Activated CD4-positive, alpha-beta T cell treated with anti-CD3 and anti-CD28 coated beads for 36 hours (primary cell): ENCODE measurements at regions of chr7 and their contacts with region 1.

Region 1: DNA sequence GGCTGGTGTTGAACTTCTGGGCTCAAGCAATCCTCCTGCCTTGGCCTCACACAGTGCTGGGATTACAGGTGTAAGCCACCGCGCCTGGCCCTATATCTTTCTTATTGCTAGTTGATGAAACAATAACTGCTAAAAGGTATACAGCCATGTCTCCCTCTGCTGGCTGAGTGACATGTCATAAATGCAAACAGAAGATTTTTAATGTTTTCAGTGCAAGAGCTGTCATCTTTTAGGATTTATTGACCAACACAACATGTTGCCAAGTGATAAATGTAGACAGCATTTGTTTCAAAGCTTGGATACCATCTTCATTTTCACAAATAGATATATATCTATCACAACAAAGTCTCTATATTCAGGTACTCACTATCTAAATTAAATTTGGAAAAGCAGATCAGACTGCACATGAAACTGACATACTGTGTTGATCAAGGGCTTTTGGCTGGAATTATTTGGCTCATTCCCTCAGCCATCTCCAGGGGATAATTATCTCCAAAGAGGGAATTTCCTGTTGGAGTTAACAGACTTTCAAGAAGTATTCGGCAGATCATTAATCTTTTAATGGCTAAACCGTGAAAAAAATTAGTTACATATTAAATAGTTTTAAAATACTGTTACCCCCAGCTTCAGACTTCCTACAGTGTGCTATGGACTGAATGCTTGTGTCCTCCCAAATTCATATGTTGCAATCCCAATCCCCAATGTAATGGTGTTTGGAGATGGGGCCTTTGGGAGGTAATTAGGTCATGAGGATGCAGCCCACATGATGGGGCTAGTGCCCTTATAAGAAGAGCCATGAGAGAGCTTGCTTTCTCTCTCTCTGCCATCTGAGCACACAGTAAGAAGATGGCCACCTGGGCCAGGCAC is 41.3 kb upstream of the SRPK2 start:
- DNase-seq: peak; percentile 74
- ATAC-seq: no peak
- H3K4me3 Mint-ChIP-seq: no peak overlapping the region
- H3K27ac Mint-ChIP-seq: no peak overlapping the region
- H3K4me1 Mint-ChIP-seq: peaks cover 19% of the 10 kb centered on the region
- H3K27me3 Mint-ChIP-seq: no peaks in the 10 kb centered on the region

Region 2: DNA sequence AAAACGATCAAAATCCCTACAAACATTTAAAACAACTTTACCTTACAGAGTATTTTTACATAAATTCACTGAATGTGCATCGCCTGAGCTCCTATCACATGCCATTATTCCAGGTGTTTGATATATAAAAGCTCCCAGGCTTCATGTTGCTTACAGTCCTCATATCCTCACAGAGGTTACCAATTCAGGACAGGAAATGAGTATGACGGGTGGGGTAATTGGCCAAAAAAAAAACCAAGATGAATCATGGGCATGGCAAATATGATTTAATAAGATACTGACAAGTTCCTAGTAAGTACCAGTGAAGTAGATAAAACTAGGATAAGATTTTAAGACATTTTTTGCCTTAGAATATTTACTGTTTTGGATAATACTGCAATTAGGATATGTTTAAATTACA is 280.2 kb before region 1 on chr7:
- CTCF ChIA-PET with region 1: interaction called, 5 read pairs
- POLR2A ChIA-PET with region 1: no interaction called
- intact Hi-C with region 1: loop called (anchors 1 to 5 kb)
- DNase-seq: no peak
- ATAC-seq: no peak
- H3K4me3 Mint-ChIP-seq: no peak overlapping the region
- H3K27ac Mint-ChIP-seq: no peak overlapping the region
- H3K4me1 Mint-ChIP-seq: peaks cover 17% of the 10 kb centered on the region
- H3K27me3 Mint-ChIP-seq: no peaks in the 10 kb centered on the region

Region 3: GRCh38 chr7:105298439-105298907 is 131.5 kb before region 1 on chr7:
- CTCF ChIA-PET with region 1: no interaction called
- POLR2A ChIA-PET with region 1: no interaction called
- intact Hi-C with region 1: loop called (anchors 5 kb)
- DNase-seq: peak; percentile 65
- ATAC-seq: peak; percentile 92
- H3K4me3 Mint-ChIP-seq: peak overlapping the region; percentile 53
- H3K27ac Mint-ChIP-seq: peak overlapping the region; percentile 90
- H3K4me1 Mint-ChIP-seq: peaks cover 58% of the 10 kb centered on the region
- H3K27me3 Mint-ChIP-seq: no peaks in the 10 kb centered on the region

Region 4: DNA sequence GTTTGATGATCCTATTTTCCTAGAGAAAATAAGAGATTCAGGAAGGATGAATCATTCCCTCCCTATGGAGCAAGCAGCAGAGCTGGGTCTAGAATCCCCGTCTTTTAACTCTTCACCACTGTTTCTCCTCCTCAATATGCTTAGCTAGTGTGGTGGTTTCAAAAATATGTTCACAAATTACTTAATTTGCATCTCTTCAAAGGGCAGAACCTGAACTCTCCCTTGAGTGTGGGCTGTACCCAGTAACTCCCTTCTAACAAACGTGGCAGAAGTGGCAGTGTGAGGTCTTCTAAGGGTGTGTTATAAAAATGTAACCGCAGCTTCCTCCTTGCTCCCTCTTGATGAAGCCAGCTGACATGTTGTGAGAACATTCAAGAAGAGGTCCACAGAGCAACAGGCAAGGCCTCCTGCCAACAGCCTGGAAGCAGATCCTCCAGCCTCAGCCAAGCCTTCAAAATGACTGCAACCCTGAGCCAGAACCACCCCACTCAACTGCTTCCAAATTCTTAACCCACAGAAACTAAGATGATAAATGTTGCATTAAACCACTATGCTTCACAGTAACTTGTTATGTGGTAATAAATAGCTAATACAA is 77.9 kb before region 1 on chr7:
- CTCF ChIA-PET with region 1: interaction called, 3 read pairs
- POLR2A ChIA-PET with region 1: no interaction called
- intact Hi-C with region 1: loop called in 1 of 2 experiments (anchors 5 kb)
- DNase-seq: peak; percentile 63
- ATAC-seq: peak; percentile 92
- H3K4me3 Mint-ChIP-seq: peak overlapping the region; percentile 15
- H3K27ac Mint-ChIP-seq: peak overlapping the region; percentile 91
- H3K4me1 Mint-ChIP-seq: peaks cover 71% of the 10 kb centered on the region
- H3K27me3 Mint-ChIP-seq: no peaks in the 10 kb centered on the region